ENCODE measurements at regions of chr20 and their contacts with region 1.

Region 1: DNA sequence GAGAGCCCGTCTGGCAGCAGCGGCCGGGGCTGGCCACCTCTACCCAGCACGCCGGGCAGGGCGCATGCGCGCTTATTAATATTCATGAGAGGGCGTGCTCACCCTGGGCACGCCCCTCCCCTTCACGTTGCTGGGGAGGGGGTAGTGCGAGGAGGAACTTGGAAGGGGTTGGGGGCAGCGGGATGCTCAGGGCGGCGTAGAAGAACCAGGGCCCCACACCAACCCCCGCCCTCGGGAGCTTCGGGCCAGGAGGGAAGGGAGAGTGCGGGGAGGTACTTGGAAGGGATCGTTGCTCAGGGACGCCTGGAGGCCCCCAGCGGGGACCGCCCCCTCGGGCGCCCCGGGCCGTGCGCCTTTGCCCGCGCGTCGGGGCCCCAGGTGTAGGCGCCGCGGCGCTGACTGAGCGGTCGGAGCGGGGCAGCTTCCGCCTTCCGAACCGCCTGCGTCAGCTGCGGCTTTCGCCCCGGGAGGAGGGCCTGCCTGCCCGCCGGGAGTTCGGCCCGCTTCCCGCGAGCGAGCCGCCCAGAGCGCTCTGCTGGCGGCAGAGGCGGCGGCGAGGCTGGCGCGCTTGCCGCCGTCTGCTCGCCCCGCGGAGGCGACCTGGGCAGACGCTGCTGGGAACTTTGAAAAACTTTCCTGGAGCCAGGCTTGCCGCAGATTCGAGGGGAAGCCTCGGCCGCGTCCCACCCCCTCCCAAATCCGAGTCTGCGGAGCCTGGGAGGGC is at the start of gene JAG1:
- DNase-seq: peak; percentile 52
- ATAC-seq: peak; percentile 76
- H3K4me3 Mint-ChIP-seq: peak within 1 kb of the TSS; percentile 83
- H3K27ac Mint-ChIP-seq: no peak within 1 kb of the TSS
- H3K4me1 Mint-ChIP-seq: peaks cover 37% of the 10 kb centered on the region
- H3K27me3 Mint-ChIP-seq: peaks cover 51% of the 10 kb centered on the region
- CTCF ChIP-seq: no peak
- total RNA-seq, gene JAG1: not detected in 2 replicates

Region 2: GRCh38 chr20:10219452-10219791 is 454.7 kb before region 1 on chr20:
- CTCF ChIA-PET with region 1: no interaction called
- POLR2A ChIA-PET with region 1: no interaction called
- intact Hi-C with region 1: loop called (anchors 10 kb)
- DNase-seq: peak; percentile 54
- ATAC-seq: peak; percentile 64
- H3K4me3 Mint-ChIP-seq: peak overlapping the region; percentile 11
- H3K27ac Mint-ChIP-seq: no peak overlapping the region
- H3K4me1 Mint-ChIP-seq: peaks cover 14% of the 10 kb centered on the region
- H3K27me3 Mint-ChIP-seq: peaks cover 53% of the 10 kb centered on the region
- CTCF ChIP-seq: no peak

Region 3: GRCh38 chr20:10634683-10635411 is 39.3 kb before region 1 on chr20:
- CTCF ChIA-PET with region 1: no interaction called
- POLR2A ChIA-PET with region 1: interaction called, 9 read pairs
- intact Hi-C with region 1: loop called (anchors 5 kb)
- DNase-seq: no peak
- ATAC-seq: no peak
- H3K4me3 Mint-ChIP-seq: no peak overlapping the region
- H3K27ac Mint-ChIP-seq: no peak overlapping the region
- H3K4me1 Mint-ChIP-seq: peaks cover 22% of the 10 kb centered on the region
- H3K27me3 Mint-ChIP-seq: no peaks in the 10 kb centered on the region
- CTCF ChIP-seq: no peak

Region 4: GRCh38 chr20:11204926-11205768 is 531.0 kb after region 1 on chr20:
- CTCF ChIA-PET with region 1: no interaction called
- POLR2A ChIA-PET with region 1: no interaction called
- intact Hi-C with region 1: no loop called
- DNase-seq: no peak
- ATAC-seq: no peak
- H3K4me3 Mint-ChIP-seq: no peak overlapping the region
- H3K27ac Mint-ChIP-seq: no peak overlapping the region
- H3K4me1 Mint-ChIP-seq: no peaks in the 10 kb centered on the region
- H3K27me3 Mint-ChIP-seq: no peaks in the 10 kb centered on the region
- CTCF ChIP-seq: no peak